ENCODE measurements at regions of chr19 and their contacts with region 1.

Region 1: GRCh38 chr19:10835754-10836477 is at the start of gene TMED1:
- DNase-seq: peak; percentile 97
- ATAC-seq: peak; percentile 85
- H3K4me3 ChIP-seq: peak within 1 kb of the TSS; percentile 64 to 97 (median 94)
- H3K4me3 Mint-ChIP-seq: peak within 1 kb of the TSS; percentile 96
- H3K27ac ChIP-seq: peak within 1 kb of the TSS; percentile 95 to 97
- H3K27ac Mint-ChIP-seq: peak within 1 kb of the TSS; percentile 100
- H3K4me1 ChIP-seq: peaks cover 7 to 17% of the 10 kb centered on the region in 2 donors
- H3K4me1 Mint-ChIP-seq: peaks cover 14% of the 10 kb centered on the region
- H3K27me3 ChIP-seq: no peaks in the 10 kb centered on the region
- H3K27me3 Mint-ChIP-seq: no peaks in the 10 kb centered on the region
- CTCF ChIP-seq: no peak
- total RNA-seq, gene TMED1: 13.1 and 14.7 TPM in 2 replicates

Region 2: DNA sequence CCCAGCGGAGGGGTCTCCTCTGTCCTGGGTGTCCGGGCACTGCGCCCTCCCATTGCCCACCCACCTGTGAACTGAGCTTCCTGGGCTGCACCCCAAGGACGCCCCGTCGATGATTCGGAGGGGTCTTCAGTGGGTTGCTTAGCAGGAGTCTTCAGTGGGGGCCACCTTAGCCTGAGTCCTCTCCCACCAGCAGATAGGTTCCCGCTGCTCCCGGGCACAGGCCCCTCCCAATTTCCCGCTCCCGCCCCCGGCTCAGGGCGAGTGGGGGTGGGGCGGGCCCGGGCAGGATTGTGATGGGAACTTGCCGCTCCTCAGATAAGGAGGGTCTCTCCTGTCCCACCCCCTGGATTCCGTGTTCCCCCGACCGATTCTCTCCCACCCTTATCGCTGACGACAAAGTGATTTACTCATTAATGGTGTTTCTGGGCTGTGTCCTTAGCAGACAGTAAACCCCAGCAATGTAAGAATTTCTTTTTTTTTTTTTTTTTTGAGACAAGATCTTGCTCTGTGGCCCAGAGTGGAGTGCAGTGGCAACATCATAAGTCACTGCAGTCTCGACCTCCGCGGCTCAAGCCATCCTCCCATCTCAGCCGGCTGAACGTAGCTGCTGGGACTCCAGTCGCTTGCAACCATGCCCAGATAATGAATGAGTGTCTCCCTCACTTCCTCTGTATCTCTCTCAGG is 318.0 kb before region 1 on chr19:
- CTCF ChIA-PET with region 1: no interaction called
- POLR2A ChIA-PET with region 1: interaction called, 13 read pairs
- intact Hi-C with region 1: no loop called
- DNase-seq: peak; percentile 42
- ATAC-seq: peak; percentile 28
- H3K4me3 ChIP-seq: peak overlapping the region in 1 of 5 experiments; percentile 14
- H3K4me3 Mint-ChIP-seq: peak overlapping the region; percentile 40
- H3K27ac ChIP-seq: no peak overlapping the region
- H3K27ac Mint-ChIP-seq: no peak overlapping the region
- H3K4me1 ChIP-seq: peaks cover 34 to 39% of the 10 kb centered on the region in 2 donors
- H3K4me1 Mint-ChIP-seq: peaks cover 36% of the 10 kb centered on the region
- H3K27me3 ChIP-seq: peaks cover 2 to 78% (median 43%) of the 10 kb centered on the region in 4 experiments
- H3K27me3 Mint-ChIP-seq: peaks cover 51% of the 10 kb centered on the region
- CTCF ChIP-seq: no peak

Region 3: DNA sequence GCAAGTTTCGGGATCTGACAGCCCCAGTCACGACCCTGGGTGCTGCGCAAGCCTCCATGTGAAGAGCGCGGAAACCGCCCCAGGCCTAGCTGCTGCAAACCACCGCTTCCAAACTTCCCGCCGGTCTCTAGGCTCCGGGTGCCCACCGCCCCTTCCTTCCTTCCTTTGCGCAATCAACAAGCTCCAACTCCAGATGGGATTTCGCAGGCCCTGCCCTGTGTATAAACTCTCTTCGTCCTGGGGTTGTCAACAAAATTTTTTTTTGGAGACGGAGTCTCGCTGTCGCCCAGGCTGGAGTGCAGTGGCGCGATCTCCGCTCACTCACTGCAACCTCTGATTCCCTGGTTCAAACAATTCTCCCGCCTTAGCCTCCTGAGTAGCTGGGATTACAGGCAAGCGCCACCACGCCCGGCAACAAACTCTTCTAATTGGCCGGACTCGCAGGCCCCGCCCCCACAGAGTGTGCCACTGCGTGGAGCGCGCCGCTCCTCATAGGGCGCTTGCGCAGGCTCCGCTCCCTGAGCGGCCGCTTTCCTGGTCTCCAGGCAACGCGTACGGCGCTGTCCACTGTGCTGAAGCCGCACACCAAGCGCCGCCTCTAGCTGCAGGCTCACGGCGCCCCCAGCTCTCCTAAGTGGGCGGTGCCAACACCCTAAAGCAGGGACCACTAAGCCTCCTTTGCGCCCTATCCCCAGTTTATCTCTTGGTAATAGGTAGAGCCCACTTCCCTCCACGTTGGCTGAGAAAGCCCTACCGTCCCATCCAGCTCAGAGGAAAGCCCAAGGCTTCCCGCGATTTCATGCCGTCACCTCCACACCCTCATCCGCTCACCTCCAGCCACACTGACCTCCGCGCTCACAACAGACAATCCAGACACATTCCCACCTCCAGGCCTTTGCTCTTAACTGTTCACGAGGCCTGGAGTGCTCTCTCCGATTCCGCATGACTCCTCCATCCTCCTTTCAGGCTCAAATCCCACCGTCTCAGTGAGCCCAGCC is 140.2 kb before region 1 on chr19:
- CTCF ChIA-PET with region 1: interaction called, 3 read pairs
- POLR2A ChIA-PET with region 1: interaction called, 12 read pairs
- intact Hi-C with region 1: no loop called
- DNase-seq: peak; percentile 90
- ATAC-seq: peak; percentile 98
- H3K4me3 ChIP-seq: peak overlapping the region; percentile 6 to 54 (median 25)
- H3K4me3 Mint-ChIP-seq: peak overlapping the region; percentile 80
- H3K27ac ChIP-seq: no peak overlapping the region
- H3K27ac Mint-ChIP-seq: peak overlapping the region; percentile 67
- H3K4me1 ChIP-seq: peaks cover 10 to 15% of the 10 kb centered on the region in 2 donors
- H3K4me1 Mint-ChIP-seq: peaks cover 17% of the 10 kb centered on the region
- H3K27me3 ChIP-seq: no peaks in the 10 kb centered on the region
- H3K27me3 Mint-ChIP-seq: no peaks in the 10 kb centered on the region
- CTCF ChIP-seq: no peak

Region 4: DNA sequence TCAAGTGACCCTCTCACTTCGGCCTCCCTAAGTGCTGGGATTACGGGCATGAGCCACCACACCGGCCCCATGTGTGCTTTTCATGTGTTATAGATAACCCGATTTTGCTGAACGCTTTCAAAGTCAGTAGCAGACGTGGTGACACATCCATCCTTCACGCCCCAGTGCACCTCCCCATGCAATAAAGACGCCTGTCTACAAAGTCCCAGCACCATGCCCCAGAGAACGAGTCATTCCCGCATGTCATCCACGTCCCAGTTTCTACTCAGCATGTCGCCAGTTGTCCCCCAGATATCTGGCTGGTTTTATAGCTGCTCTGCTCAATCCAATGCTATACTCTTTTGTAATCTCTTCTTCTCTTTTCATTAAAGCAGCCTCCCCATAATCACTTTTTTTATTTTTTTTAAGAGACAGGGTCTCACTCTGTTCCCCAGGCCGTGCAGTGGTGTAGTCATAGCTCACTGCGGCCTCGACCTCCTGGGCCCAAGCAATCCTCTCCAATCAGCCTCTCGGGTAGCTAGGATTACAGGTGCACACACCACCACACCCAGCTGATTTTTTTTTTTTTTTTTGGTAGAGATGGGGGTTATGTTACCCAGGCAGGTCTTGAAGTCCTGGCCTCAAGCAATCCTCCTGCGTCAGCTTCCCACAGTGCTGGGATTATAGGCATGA is 75.5 kb before region 1 on chr19:
- CTCF ChIA-PET with region 1: no interaction called
- POLR2A ChIA-PET with region 1: interaction called, 9 read pairs
- intact Hi-C with region 1: loop called (anchors 1 kb)
- DNase-seq: peak; percentile 78
- ATAC-seq: peak; percentile 56
- H3K4me3 ChIP-seq: peak overlapping the region in 4 of 5 experiments; percentile 14 to 57 (median 28)
- H3K4me3 Mint-ChIP-seq: peak overlapping the region; percentile 85
- H3K27ac ChIP-seq: peak overlapping the region; percentile 86 to 92
- H3K27ac Mint-ChIP-seq: peak overlapping the region; percentile 94
- H3K4me1 ChIP-seq: peaks cover 63 to 92% of the 10 kb centered on the region in 2 donors
- H3K4me1 Mint-ChIP-seq: peaks cover 82% of the 10 kb centered on the region
- H3K27me3 ChIP-seq: no peaks in the 10 kb centered on the region
- H3K27me3 Mint-ChIP-seq: no peaks in the 10 kb centered on the region
- CTCF ChIP-seq: no peak

Region 5: DNA sequence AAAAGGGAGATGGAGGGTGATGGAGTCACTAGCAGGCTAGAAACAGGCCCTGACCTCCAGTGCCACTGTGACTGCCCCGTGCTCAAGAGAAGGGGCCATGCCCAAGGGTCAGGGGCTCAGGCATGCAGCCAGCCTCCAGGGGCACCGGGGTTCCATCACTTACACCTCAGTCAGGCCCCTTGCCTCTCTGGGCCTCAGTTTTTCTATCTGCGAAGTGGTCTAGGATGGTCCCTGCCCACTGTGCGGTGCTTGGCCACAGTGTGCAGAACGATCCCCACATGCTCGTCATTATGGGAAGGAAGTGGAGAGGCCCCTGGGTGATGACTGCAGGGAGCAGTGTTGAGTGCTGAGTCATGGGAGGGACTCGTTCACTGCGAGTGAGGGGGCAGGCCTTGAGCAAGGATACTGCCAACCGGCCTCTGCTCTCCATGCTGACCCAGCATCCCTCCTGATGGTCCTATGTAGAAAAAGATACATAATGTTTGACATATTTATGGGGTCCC is 23.0 kb before region 1 on chr19:
- CTCF ChIA-PET with region 1: no interaction called
- POLR2A ChIA-PET with region 1: no interaction called
- intact Hi-C with region 1: no loop called
- DNase-seq: no peak
- ATAC-seq: no peak
- H3K4me3 ChIP-seq: no peak overlapping the region
- H3K4me3 Mint-ChIP-seq: no peak overlapping the region
- H3K27ac ChIP-seq: no peak overlapping the region
- H3K27ac Mint-ChIP-seq: no peak overlapping the region
- H3K4me1 ChIP-seq: no peaks in the 10 kb centered on the region
- H3K4me1 Mint-ChIP-seq: peaks cover 4% of the 10 kb centered on the region
- H3K27me3 ChIP-seq: no peaks in the 10 kb centered on the region
- H3K27me3 Mint-ChIP-seq: no peaks in the 10 kb centered on the region
- CTCF ChIP-seq: no peak

Region 6: DNA sequence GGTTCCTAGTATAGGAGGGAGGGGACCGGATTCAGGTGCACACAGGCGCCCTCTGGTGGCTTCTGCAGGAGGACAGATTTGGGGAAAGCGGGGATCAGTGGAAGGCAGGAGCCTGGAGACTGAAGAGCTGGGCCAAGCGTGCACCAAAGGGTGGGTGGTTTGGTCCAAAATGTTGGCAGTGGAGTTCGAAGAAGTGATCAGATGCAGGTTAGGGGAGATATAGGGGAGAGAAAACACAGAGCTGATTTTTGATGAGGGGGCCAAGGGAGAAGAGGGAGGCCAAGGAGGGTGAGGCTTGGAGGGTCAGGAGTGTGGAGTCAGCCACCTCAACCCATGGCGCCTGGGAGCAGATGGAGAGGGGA is 28.6 kb after region 1 on chr19:
- CTCF ChIA-PET with region 1: interaction called, 62 read pairs
- POLR2A ChIA-PET with region 1: interaction called, 9 read pairs
- intact Hi-C with region 1: loop called (anchors 1 kb)
- DNase-seq: peak; percentile 81
- ATAC-seq: peak; percentile 69
- H3K4me3 ChIP-seq: no peak overlapping the region
- H3K4me3 Mint-ChIP-seq: no peak overlapping the region
- H3K27ac ChIP-seq: no peak overlapping the region
- H3K27ac Mint-ChIP-seq: peak overlapping the region; percentile 38
- H3K4me1 ChIP-seq: peaks cover 21 to 31% of the 10 kb centered on the region in 2 donors
- H3K4me1 Mint-ChIP-seq: peaks cover 34% of the 10 kb centered on the region
- H3K27me3 ChIP-seq: no peaks in the 10 kb centered on the region
- H3K27me3 Mint-ChIP-seq: no peaks in the 10 kb centered on the region
- CTCF ChIP-seq: peak; percentile 83

Region 7: GRCh38 chr19:10870955-10871603 is 35.2 kb after region 1 on chr19 and contains the start of gene CARM1:
- CTCF ChIA-PET with region 1: interaction called, 62 read pairs
- POLR2A ChIA-PET with region 1: interaction called, 9 read pairs
- intact Hi-C with region 1: loop called (anchors 1 kb)
- DNase-seq: peak; percentile 99
- ATAC-seq: peak; percentile 83
- H3K4me3 ChIP-seq: peak within 1 kb of the TSS; percentile 41 to 79 (median 67)
- H3K4me3 Mint-ChIP-seq: peak within 1 kb of the TSS; percentile 86
- H3K27ac ChIP-seq: peak within 1 kb of the TSS; percentile 75 to 79
- H3K27ac Mint-ChIP-seq: peak within 1 kb of the TSS; percentile 85
- H3K4me1 ChIP-seq: peaks cover 33 to 46% of the 10 kb centered on the region in 2 donors
- H3K4me1 Mint-ChIP-seq: peaks cover 43% of the 10 kb centered on the region
- H3K27me3 ChIP-seq: no peaks in the 10 kb centered on the region
- H3K27me3 Mint-ChIP-seq: no peaks in the 10 kb centered on the region
- CTCF ChIP-seq: peak; percentile 55
- total RNA-seq, gene CARM1: 29.4 and 33.0 TPM in 2 replicates

Region 8: DNA sequence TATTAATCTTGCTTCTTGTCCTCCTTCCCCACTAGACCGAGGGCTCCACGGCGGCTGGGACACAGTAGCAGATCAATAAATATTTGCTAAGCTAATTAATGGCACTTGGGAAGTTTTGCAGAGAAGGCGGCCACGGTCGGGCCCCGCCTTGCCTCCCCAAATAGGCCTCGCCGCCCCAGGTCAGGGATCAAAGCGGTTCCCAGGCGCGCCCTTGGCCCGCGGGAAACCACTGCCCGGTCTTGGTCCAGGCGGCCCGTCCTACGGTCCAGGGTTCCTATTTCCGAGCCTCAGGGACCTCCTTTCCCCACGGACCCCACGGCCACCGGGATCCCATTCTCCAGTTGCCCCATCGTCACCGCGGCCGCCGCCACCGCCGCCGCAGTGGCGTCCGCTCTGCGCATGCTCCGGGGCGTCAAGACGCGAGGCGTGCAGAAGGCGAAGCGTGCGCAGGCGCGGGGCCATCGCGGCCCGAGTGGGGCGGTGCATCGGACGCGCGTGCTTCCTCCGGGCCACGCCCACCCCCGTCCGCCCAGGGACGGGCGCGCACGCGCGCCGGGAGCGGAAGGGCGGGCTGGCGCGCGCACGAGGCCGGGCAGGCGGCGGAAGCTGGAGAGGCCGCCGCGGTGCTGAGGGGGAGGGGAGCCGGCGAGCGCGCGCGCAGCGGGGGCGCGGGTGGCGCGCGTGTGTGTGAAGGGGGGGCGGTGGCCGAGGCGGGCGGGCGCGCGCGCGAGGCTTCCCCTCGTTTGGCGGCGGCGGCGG is 124.6 kb after region 1 on chr19 and contains the start of gene SMARCA4:
- CTCF ChIA-PET with region 1: no interaction called
- POLR2A ChIA-PET with region 1: no interaction called
- intact Hi-C with region 1: no loop called
- DNase-seq: peak; percentile 99
- ATAC-seq: peak; percentile 84
- H3K4me3 ChIP-seq: peak within 1 kb of the TSS; percentile 67 to 90 (median 80)
- H3K4me3 Mint-ChIP-seq: peak within 1 kb of the TSS; percentile 93
- H3K27ac ChIP-seq: peak within 1 kb of the TSS; percentile 76 to 84
- H3K27ac Mint-ChIP-seq: peak within 1 kb of the TSS; percentile 96
- H3K4me1 ChIP-seq: peaks cover 22 to 37% of the 10 kb centered on the region in 2 donors
- H3K4me1 Mint-ChIP-seq: peaks cover 40% of the 10 kb centered on the region
- H3K27me3 ChIP-seq: no peaks in the 10 kb centered on the region
- H3K27me3 Mint-ChIP-seq: no peaks in the 10 kb centered on the region
- CTCF ChIP-seq: no peak
- total RNA-seq, gene SMARCA4: 82.3 and 82.7 TPM in 2 replicates

Region 9: DNA sequence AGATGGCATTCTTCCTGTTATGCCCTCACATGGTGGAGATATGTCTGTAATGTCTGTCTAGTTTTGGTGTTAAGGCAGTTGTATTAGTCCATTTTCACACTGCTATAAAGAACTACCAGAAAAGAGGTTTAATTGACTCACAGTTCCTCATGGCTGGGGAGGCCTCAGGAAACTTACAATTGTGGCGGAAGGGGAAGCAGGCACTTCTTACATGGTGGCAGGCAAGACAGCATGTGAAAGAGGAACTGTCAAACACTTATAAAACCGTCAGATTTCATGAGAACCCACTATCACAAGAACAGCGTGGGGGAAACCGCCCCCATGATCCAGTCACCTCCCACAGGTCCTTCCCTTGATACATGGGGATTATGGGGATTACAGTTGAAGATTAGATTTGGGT is 934.1 kb after region 1 on chr19:
- CTCF ChIA-PET with region 1: no interaction called
- POLR2A ChIA-PET with region 1: no interaction called
- intact Hi-C with region 1: no loop called
- DNase-seq: peak; percentile 26
- ATAC-seq: no peak
- H3K4me3 ChIP-seq: no peak overlapping the region
- H3K4me3 Mint-ChIP-seq: no peak overlapping the region
- H3K27ac ChIP-seq: peak overlapping the region in 1 of 2 donors; percentile 94
- H3K27ac Mint-ChIP-seq: peak overlapping the region; percentile 44
- H3K4me1 ChIP-seq: peaks cover 16 to 22% of the 10 kb centered on the region in 2 donors
- H3K4me1 Mint-ChIP-seq: peaks cover 23% of the 10 kb centered on the region
- H3K27me3 ChIP-seq: no peaks in the 10 kb centered on the region
- H3K27me3 Mint-ChIP-seq: no peaks in the 10 kb centered on the region
- CTCF ChIP-seq: no peak